Motor neuron (in vitro differentiated cells): ENCODE measurements at regions of chr22 and their contacts with region 1.

Region 1: GRCh38 chr22:20750461-20751184 is 23.3 kb upstream of the SERPIND1 start:
- ATAC-seq: peak in 6 of 8 experiments; percentile 32 to 96 (median 82)
- H3K4me3 ChIP-seq: no peak overlapping the region
- H3K27ac ChIP-seq: peak overlapping the region in 1 of 2 donors; percentile 22
- H3K4me1 ChIP-seq: no peaks in the 10 kb centered on the region

Region 2: DNA sequence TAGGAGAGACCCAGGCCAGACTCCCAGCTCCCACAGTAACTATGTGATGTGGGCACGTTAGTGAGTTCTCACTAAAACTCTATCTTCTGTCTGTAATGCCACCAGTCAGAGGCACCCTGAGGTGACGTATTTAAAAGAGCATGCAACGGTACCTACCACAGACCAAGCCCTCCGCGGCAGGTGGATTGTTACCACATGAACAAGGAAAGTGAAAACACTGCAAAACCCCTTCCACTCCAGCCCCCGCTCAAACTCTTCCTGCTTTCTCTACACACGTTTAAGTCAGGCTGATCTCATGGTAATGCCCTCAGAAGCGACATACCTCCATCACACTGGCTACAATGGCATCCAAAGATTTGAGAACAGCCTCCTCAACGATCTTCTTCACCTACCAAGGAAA is 60.0 kb after region 1 on chr22:
- in situ Hi-C with region 1: loop called in 1 of 9 experiments (anchors 10 kb)
- ATAC-seq: no peak
- H3K4me3 ChIP-seq: no peak overlapping the region
- H3K27ac ChIP-seq: no peak overlapping the region
- H3K4me1 ChIP-seq: no peaks in the 10 kb centered on the region